Activated T-helper 1 cell treated with anti-CD3 and anti-CD28 coated beads, Interleukin-12 subunit alpha, Interleukin-12 subunit beta, Interleukin-2, Interleukin-4 antibody, amounts not matched to agents 30 ng/mL and 10 ng/mL and 1 ng/mL, durations not matched to agents 14 hours and 24 hours and 36 hours (primary cell): ENCODE measurements at regions of chr12 and their contacts with region 1.

Region 1: DNA sequence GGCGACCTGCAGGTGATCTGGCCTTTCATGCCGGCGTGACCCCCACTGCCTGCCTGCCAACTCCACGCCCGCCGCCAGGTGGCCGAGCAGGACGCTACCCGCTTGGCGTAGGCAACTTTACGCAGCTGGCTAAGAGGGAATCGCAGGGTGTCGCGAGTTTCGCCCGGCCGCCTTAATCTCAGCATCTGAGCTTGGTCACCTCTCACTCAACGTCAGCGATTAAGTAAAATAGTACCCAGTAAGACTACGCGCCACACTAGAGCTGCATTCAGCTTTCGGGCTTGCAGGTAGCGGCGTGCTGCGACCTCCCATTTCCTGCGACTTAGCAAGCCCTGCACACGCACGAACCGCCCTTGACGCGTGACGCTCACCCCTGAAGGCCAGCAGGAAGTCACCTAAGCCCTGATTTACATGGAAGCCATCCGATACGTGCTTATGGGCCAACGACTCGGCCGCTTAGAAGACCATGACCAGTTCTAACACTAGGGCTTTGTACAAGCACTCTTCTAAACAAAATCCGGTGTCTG is 33.2 kb downstream of the WBP11 start:
- DNase-seq: peak; percentile 79
- H3K4me3 Mint-ChIP-seq: peak overlapping the region; percentile 86
- H3K27ac Mint-ChIP-seq: peak overlapping the region; percentile 97
- H3K4me1 Mint-ChIP-seq: peaks cover 61% of the 10 kb centered on the region
- H3K27me3 Mint-ChIP-seq: no peaks in the 10 kb centered on the region

Region 2: GRCh38 chr12:14239350-14239934 is 530.6 kb before region 1 on chr12:
- intact Hi-C with region 1: loop called (anchors 5 kb)
- DNase-seq: no peak
- H3K4me3 Mint-ChIP-seq: peak overlapping the region; percentile 74
- H3K27ac Mint-ChIP-seq: peak overlapping the region; percentile 73
- H3K4me1 Mint-ChIP-seq: peaks cover 22% of the 10 kb centered on the region
- H3K27me3 Mint-ChIP-seq: no peaks in the 10 kb centered on the region

Region 3: GRCh38 chr12:14394317-14395073 is 375.5 kb before region 1 on chr12:
- intact Hi-C with region 1: loop called (anchors 2 kb)
- DNase-seq: peak; percentile 38
- H3K4me3 Mint-ChIP-seq: peak overlapping the region; percentile 64
- H3K27ac Mint-ChIP-seq: peak overlapping the region; percentile 89
- H3K4me1 Mint-ChIP-seq: peaks cover 87% of the 10 kb centered on the region
- H3K27me3 Mint-ChIP-seq: no peaks in the 10 kb centered on the region

Region 4: DNA sequence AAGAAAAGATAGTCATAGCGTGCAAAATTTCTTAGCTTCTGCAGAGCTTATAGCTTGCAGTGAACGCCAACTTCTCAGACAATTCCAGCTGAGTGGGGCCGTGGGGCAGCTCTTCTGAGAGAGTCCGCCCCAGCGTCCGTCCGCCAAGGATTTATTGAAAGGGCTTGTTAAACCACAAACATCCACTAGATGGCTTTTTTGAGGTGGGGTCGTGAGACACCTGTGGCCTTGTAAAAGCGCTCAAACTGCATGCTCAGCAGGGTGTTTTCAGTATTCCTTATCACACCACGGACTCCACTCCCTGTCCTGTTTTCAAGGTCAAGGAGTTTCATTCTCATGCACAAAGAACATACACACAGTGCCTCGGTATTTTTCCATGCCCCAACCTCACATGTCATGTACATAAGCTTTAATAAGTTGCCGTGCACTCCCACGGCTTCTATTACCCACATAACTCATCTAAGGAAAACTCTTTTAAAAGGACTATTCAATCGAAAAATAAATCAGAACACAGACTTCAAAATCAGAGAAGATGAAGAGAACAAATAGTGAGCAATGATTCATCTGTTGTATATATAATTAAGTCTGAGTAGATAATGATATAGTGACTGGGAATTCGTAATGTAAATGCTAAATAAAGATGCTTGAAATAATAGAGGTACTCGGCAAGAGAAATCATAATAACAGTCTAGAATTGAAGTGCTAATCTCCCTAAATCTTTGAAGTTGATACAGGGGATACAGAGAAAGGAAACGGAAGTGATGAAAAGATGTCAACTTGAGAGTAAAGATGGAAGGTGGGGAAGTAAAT is 13.5 kb before region 1 on chr12:
- intact Hi-C with region 1: no loop called
- DNase-seq: no peak
- H3K4me3 Mint-ChIP-seq: no peak overlapping the region
- H3K27ac Mint-ChIP-seq: no peak overlapping the region
- H3K4me1 Mint-ChIP-seq: no peaks in the 10 kb centered on the region
- H3K27me3 Mint-ChIP-seq: peaks cover 5% of the 10 kb centered on the region

Region 5: DNA sequence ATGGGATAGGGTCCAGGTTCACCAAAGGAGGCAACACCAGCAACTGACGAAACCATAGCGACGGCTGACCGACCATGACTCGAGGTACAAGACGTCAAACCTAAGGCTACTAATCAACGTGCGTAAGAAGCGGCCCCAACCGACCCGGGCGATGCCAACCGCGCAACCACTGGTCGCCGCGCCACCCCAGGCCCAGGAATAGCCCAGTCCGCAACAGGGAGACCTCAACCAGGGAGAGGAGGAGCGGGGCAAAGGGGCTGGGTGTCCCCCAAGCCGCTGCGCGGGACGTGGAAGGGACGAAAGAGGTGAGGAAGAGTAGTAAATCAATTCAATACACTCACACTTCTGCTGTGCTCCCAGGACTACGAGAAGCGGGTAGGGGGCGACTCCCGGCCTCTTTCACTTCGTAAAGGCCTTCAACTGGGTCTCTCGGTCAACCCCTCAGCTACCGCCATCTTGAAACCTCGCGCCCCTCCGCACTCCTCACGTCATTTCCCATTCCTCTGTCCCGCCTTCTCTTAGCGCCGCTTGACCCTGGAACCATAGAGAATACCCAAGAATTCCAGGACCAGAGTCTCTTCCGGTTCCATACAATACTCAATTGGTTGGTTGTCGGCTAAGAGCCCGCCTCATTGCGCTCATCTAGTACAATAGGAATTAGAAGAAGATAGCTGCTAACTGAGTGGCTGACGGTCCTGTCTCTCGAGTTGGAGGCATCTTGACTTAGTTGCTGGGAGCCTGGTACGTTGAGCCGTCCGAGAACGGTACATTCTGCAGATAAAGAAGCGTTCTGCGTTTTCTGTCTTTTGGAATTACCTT is 33.2 kb after region 1 on chr12 and contains the starts of genes C12orf60 and WBP11:
- intact Hi-C with region 1: loop called (anchors 1 kb)
- DNase-seq: peak; percentile 84
- H3K4me3 Mint-ChIP-seq: no peak within 1 kb of the TSS
- H3K27ac Mint-ChIP-seq: no peak within 1 kb of the TSS
- H3K4me1 Mint-ChIP-seq: peaks cover 22% of the 10 kb centered on the region
- H3K27me3 Mint-ChIP-seq: no peaks in the 10 kb centered on the region
- total RNA-seq, gene C12orf60: 2.1 and 2.2 TPM in 2 replicates
- total RNA-seq, gene WBP11: 128 and 142 TPM in 2 replicates

Region 6: GRCh38 chr12:15575671-15576541 is 805.9 kb after region 1 on chr12:
- intact Hi-C with region 1: loop called (anchors 2 kb)
- DNase-seq: no peak
- H3K4me3 Mint-ChIP-seq: peak overlapping the region; percentile 12
- H3K27ac Mint-ChIP-seq: peak overlapping the region; percentile 88
- H3K4me1 Mint-ChIP-seq: peaks cover 64% of the 10 kb centered on the region
- H3K27me3 Mint-ChIP-seq: no peaks in the 10 kb centered on the region

Region 7: DNA sequence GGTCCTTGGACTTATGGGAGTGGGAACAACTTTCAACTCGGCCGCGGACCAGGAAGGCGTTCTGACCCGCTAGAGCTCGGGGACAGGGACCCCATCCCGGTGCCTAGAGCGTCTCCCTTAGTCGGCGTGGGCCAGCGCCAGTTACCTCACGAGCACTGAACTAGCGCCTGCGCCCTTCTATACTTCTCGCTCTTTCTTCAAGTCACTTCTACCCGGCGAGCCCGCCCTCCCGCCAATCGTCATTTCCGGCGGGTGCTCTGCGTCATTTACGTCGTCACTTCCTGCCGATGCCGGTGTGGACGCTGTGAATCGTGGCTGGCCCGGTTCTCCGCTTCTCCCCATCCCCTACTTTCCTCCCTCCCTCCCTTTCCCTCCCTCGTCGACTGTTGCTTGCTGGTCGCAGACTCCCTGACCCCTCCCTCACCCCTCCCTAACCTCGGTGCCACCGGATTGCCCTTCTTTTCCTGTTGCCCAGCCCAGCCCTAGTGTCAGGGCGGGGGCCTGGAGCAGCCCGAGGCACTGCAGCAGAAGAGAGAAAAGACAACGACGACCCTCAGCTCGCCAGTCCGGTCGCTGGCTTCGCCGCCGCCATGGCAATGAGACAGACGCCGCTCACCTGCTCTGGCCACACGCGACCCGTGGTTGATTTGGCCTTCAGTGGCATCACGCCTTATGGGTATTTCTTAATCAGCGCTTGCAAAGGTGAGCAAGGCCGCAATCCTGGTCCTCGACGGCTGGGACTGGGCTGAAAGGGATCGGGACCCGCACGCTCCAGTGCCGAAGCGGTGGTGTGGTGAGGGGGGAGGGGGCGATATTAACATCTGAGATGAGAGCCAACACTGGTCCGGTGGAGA is 1112.3 kb after region 1 on chr12 and contains the start of gene STRAP:
- intact Hi-C with region 1: loop called (anchors 1 kb)
- DNase-seq: peak; percentile 94
- H3K4me3 Mint-ChIP-seq: peak within 1 kb of the TSS; percentile 97
- H3K27ac Mint-ChIP-seq: peak within 1 kb of the TSS; percentile 99
- H3K4me1 Mint-ChIP-seq: peaks cover 59% of the 10 kb centered on the region
- H3K27me3 Mint-ChIP-seq: no peaks in the 10 kb centered on the region
- total RNA-seq, gene STRAP: 147 and 156 TPM in 2 replicates